ENCODE measurements at regions of chr11 and their contacts with region 1.

Region 1: GRCh38 chr11:115334932-115335788 is 169.1 kb downstream of the CADM1 start:
- DNase-seq: no peak
- ATAC-seq: peak in 2 of 4 donors; percentile 39 to 58
- H3K4me3 ChIP-seq: no peak overlapping the region
- H3K27ac ChIP-seq: no peak overlapping the region
- H3K4me1 ChIP-seq: no peaks in the 10 kb centered on the region
- H3K27me3 ChIP-seq: no peaks in the 10 kb centered on the region
- CTCF ChIP-seq: peak; percentile 11 to 61 (median 40)

Region 2: GRCh38 chr11:115504276-115505158 is 169.4 kb after region 1 on chr11 and contains the start of gene CADM1:
- intact Hi-C with region 1: loop called in 1 of 3 experiments (anchors 10 kb)
- DNase-seq: peak; percentile 94 to 97 (median 95)
- ATAC-seq: peak; percentile 91 to 94 (median 92)
- H3K4me3 ChIP-seq: peak within 1 kb of the TSS; percentile 40 to 70 (median 52)
- H3K27ac ChIP-seq: peak within 1 kb of the TSS; percentile 39 to 82 (median 70)
- H3K4me1 ChIP-seq: peaks cover 0 to 13% (median 6%) of the 10 kb centered on the region in 3 donors
- H3K27me3 ChIP-seq: peaks cover 0 to 15% (median 0%) of the 10 kb centered on the region in 4 donors
- CTCF ChIP-seq: peak; percentile 53 to 89 (median 71)
- total RNA-seq, gene CADM1: 10.8 to 37.3 (median 24.5) TPM

Measured in pancreas (tissue), 10 donors.